ENCODE measurements at regions of chr4 and their contacts with region 1.

Region 1: GRCh38 chr4:13654158-13654797 is 26.8 kb upstream of the BOD1L1 start:
- DNase-seq: peak; percentile 88
- H3K4me3 Mint-ChIP-seq: peak overlapping the region; percentile 76
- H3K27ac Mint-ChIP-seq: no peak overlapping the region
- H3K4me1 Mint-ChIP-seq: peaks cover 15% of the 10 kb centered on the region
- H3K27me3 Mint-ChIP-seq: peaks cover 1% of the 10 kb centered on the region

Region 2: DNA sequence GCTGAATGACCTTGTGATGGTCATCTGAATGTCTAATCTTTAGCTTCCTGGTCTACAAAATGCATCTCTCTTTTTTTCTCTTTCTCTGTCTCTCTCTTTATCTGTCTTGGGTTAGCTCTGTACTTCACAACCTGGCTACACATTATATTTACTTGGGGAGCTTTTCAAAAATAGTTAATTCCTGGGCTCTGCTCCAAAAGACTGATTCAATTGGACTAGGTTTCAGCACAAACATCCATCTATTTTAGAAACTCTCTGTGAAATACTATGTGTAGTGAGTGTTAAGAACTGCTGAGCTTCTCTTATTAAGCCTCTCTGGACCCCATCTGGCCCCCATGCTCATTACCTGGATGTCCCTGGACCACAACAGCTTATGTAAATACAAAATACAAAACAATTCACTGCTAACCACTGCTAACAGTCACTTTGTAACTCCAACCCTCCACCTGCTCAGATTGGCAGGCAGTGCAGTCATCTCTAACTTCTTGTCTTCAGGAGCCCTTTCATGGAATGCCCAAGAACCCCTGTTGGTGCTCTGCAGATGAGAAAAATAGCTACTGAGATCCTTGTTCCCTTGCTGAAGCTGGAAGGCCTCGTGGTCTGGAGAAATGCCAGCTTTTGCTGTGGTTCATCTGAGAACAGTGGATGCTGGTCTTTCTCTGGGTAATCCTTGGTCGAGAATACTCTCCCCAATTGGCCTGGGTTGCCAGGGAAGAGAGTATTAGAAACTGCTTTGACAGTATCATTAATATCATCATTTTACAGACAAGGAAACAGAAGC is 11.9 kb before region 1 on chr4:
- CTCF ChIA-PET with region 1: interaction called, 49 read pairs
- intact Hi-C with region 1: no loop called
- DNase-seq: no peak
- H3K4me3 Mint-ChIP-seq: no peak overlapping the region
- H3K27ac Mint-ChIP-seq: no peak overlapping the region
- H3K4me1 Mint-ChIP-seq: peaks cover 2% of the 10 kb centered on the region
- H3K27me3 Mint-ChIP-seq: peaks cover 28% of the 10 kb centered on the region

Region 3: GRCh38 chr4:13933191-13933590 is 278.9 kb after region 1 on chr4:
- CTCF ChIA-PET with region 1: interaction called, 4 read pairs
- intact Hi-C with region 1: loop called (anchors 10 kb)
- DNase-seq: no peak
- H3K4me3 Mint-ChIP-seq: no peak overlapping the region
- H3K27ac Mint-ChIP-seq: no peak overlapping the region
- H3K4me1 Mint-ChIP-seq: no peaks in the 10 kb centered on the region
- H3K27me3 Mint-ChIP-seq: peaks cover 5% of the 10 kb centered on the region

Region 4: DNA sequence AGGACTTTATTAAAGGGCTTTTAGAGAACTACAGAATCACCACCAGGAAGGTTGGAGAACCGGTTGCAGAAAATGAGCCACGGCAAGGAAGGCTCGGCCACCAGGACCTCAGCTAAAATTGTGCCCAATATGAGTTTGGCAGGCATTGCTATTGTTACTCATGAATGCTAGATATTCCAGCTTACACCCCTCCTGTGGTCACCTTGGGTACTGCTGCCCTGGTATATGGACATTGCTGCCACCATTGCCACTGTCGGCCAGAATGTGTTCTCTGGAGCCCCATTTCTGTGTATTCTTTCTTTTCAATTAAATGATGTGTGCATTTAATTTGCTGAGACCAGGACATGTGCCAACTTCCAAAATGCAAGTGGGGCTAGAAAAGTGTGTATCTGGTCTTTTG is 600.0 kb after region 1 on chr4:
- CTCF ChIA-PET with region 1: interaction called, 3 read pairs
- intact Hi-C with region 1: loop called (anchors 10 kb)
- DNase-seq: peak; percentile 25
- H3K4me3 Mint-ChIP-seq: no peak overlapping the region
- H3K27ac Mint-ChIP-seq: no peak overlapping the region
- H3K4me1 Mint-ChIP-seq: no peaks in the 10 kb centered on the region
- H3K27me3 Mint-ChIP-seq: no peaks in the 10 kb centered on the region

Region 5: GRCh38 chr4:15001869-15002658 is 1347.8 kb after region 1 on chr4 and contains the start of gene CPEB2:
- CTCF ChIA-PET with region 1: interaction called, 4 read pairs
- intact Hi-C with region 1: loop called (anchors 1 kb)
- DNase-seq: peak; percentile 91
- H3K4me3 Mint-ChIP-seq: peak within 1 kb of the TSS; percentile 88
- H3K27ac Mint-ChIP-seq: peak within 1 kb of the TSS; percentile 94
- H3K4me1 Mint-ChIP-seq: peaks cover 12% of the 10 kb centered on the region
- H3K27me3 Mint-ChIP-seq: no peaks in the 10 kb centered on the region
- total RNA-seq, gene CPEB2: 4.4 to 5.4 TPM

Region 6: GRCh38 chr4:15457406-15458201 is 1803.3 kb after region 1 on chr4:
- CTCF ChIA-PET with region 1: no interaction called
- intact Hi-C with region 1: loop called (anchors 1 kb)
- DNase-seq: no peak
- H3K4me3 Mint-ChIP-seq: no peak overlapping the region
- H3K27ac Mint-ChIP-seq: no peak overlapping the region
- H3K4me1 Mint-ChIP-seq: peaks cover 6% of the 10 kb centered on the region
- H3K27me3 Mint-ChIP-seq: no peaks in the 10 kb centered on the region

Measured in activated naive CD4-positive, alpha-beta T cell treated with anti-CD3 and anti-CD28 coated beads for 36 hours (primary cell).